ENCODE measurements at regions of chr3 and their contacts with region 1.

Region 1: DNA sequence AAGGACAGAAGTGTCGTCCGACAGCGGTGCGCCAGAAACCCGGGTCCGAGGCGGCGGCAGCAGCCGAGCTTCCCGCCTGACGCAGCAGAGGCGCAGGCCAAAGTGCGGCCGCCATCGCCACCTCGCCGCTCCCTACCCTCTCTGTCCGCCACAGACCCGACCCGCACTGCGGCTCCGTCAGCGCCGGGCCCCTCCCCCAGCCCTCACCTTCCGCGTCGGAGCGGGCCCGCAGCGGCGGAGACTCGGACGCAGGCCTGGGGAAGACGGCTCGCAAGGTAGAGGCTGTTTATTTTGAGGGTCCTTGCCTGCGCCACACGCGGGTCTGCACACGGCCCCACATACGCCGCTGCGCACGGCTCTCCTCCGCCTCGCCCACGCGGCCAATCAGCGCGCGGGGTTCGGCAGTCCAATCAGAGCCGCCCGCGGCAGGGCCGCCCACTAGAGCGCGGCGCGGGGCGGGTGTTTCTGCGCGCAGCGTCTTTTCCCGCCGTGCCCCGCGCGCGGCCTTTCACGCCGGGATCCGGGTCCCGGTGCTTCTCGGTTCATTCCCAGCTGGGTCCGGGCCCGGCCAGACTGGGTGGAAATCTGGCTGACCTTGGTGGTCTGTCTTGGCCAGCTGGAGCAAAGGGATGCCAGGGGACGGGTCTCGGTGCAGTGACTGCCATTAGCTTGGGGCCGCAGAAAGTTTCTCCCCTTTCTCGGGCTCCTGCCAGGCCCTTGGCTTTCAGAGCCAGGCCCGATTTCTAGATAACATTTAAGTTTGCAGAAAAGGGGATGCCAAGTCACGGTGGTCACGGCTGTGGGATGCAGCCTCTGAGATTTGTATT is at the start of gene CNBP:
- DNase-seq: peak; percentile 93
- H3K4me3 Mint-ChIP-seq: peak within 1 kb of the TSS; percentile 94
- H3K27ac Mint-ChIP-seq: peak within 1 kb of the TSS; percentile 93
- H3K4me1 Mint-ChIP-seq: peaks cover 48% of the 10 kb centered on the region
- H3K27me3 Mint-ChIP-seq: no peaks in the 10 kb centered on the region
- total RNA-seq, gene CNBP: 321 to 322 TPM

Region 2: GRCh38 chr3:128956440-128956839 is 227.3 kb before region 1 on chr3:
- CTCF ChIA-PET with region 1: no interaction called
- POLR2A ChIA-PET with region 1: no interaction called
- DNase-seq: no peak
- H3K4me3 Mint-ChIP-seq: no peak overlapping the region
- H3K27ac Mint-ChIP-seq: no peak overlapping the region
- H3K4me1 Mint-ChIP-seq: no peaks in the 10 kb centered on the region
- H3K27me3 Mint-ChIP-seq: peaks cover 12% of the 10 kb centered on the region

Region 3: DNA sequence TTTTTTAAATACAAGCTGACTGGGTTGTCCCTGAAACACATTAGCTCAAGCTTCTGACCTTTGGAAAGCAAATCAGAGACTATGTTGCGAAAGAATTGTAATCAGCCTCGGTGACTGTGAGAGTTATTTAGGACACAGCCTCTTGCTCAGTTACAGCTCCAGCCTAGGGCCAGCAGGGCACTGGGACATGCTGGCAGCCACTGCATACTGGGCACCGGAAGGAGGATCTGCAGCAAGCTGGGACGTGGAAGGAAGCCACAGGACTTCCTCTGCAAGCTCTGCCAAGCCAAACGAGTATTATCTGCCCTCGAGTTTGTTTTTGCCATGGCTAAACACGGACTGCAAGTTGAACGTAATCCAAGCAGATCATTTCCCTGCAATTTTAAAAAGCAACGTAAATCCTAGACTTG is 41.2 kb after region 1 on chr3:
- CTCF ChIA-PET with region 1: interaction called, 6 read pairs
- POLR2A ChIA-PET with region 1: interaction called, 74 read pairs
- DNase-seq: peak; percentile 42
- H3K4me3 Mint-ChIP-seq: no peak overlapping the region
- H3K27ac Mint-ChIP-seq: peak overlapping the region; percentile 73
- H3K4me1 Mint-ChIP-seq: peaks cover 50% of the 10 kb centered on the region
- H3K27me3 Mint-ChIP-seq: no peaks in the 10 kb centered on the region

Region 4: DNA sequence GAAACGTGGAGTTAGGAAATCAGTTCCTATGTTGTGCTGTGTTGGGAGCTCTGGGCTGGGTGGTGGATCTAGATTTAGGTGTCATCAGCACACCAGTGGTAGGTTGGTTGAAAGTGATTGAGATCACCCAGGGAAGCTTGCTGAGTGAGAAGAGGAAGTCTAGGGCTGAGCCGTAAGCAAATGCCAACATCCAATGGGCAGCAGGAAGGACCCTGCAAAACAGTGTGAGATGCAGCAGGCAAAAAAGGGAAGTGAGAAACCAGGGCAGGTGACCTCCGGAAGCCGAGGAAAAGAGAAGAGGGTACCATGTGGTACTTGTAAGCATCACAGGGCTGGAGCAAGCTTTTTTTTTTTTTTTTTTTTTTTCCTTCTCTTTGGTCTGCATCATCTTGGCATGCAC is 49.8 kb after region 1 on chr3:
- CTCF ChIA-PET with region 1: interaction called, 21 read pairs
- POLR2A ChIA-PET with region 1: interaction called, 393 read pairs
- DNase-seq: no peak
- H3K4me3 Mint-ChIP-seq: no peak overlapping the region
- H3K27ac Mint-ChIP-seq: peak overlapping the region; percentile 64
- H3K4me1 Mint-ChIP-seq: peaks cover 77% of the 10 kb centered on the region
- H3K27me3 Mint-ChIP-seq: no peaks in the 10 kb centered on the region

Region 5: GRCh38 chr3:129238945-129239706 is 55.3 kb after region 1 on chr3:
- CTCF ChIA-PET with region 1: interaction called, 71 read pairs
- POLR2A ChIA-PET with region 1: interaction called, 393 read pairs
- DNase-seq: peak; percentile 64
- H3K4me3 Mint-ChIP-seq: peak overlapping the region; percentile 59
- H3K27ac Mint-ChIP-seq: peak overlapping the region; percentile 97
- H3K4me1 Mint-ChIP-seq: peaks cover 59% of the 10 kb centered on the region
- H3K27me3 Mint-ChIP-seq: no peaks in the 10 kb centered on the region

Region 6: DNA sequence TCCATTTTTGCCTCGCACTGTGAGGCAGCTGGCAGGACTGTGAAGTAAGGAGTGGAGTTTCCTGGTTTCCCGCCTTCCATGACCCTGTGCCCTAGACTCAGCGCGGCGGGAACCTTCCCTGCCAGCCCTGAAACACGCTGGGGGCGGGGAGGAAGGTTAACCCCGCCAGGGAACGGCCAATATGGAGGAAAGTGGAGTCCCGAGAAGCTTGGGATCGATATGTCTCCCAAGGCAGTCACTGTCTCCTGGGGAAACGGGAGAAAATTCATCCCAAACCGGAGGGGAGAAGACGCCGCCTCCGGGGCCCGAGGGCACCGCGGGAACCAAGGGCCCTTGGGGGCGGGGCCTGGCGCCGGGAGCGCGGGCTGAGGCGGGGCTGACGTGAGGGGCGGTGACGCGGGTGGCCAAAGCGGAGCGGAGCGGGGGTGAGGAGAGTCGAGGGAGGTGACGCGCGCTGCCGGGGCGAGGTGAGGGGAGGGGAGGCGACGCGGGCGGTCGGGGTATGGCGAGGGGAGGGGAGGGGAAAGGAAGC is 94.7 kb after region 1 on chr3 and contains the start of gene HMCES:
- CTCF ChIA-PET with region 1: no interaction called
- POLR2A ChIA-PET with region 1: interaction called, 15 read pairs
- DNase-seq: peak; percentile 94
- H3K4me3 Mint-ChIP-seq: peak within 1 kb of the TSS; percentile 97
- H3K27ac Mint-ChIP-seq: peak within 1 kb of the TSS; percentile 91
- H3K4me1 Mint-ChIP-seq: peaks cover 51% of the 10 kb centered on the region
- H3K27me3 Mint-ChIP-seq: no peaks in the 10 kb centered on the region
- total RNA-seq, gene HMCES: 45.7 to 50.1 TPM

Measured in activated CD4-positive, alpha-beta memory T cell treated with anti-CD3 and anti-CD28 coated beads, Interleukin-2, amount 10 ng/mL, durations not matched to agents 7 days and 5 days (primary cell).